ENCODE measurements at regions of chr20 and their contacts with region 1.

Region 1: DNA sequence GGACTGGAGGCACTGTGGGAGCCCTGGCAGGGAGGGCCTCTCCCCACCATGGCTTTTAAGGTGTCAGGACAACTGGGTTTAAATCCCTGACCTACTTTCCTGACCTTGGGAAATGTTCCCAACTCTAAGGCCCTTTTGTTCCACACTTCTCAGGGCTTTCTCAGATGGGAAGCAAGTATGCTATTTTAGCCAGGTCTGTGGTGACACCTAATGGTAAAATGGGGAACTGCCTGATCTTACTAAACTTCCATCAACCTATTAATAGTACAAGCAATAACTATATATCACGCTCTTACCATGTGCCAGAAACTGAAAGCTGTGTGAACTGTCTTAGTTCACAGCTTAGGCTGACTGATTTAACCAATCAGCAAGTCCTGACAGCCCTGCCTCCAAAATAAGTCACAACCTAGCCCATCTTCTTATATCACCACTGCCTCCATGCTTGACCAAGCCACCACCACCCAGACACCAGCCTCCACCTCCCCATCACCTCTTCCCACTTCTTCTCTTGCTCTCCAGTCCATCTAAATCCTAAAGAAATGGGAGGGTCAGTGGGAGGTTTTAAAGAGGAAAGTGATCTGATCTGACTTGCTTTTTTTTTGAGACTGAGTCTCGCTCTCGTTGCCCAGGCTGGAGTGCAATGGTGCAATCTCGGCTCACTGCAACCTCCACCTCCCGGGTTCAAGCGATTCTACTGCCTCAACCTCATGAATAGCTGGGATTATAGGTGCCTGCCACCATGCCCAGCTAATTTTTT is 6.9 kb upstream of the BLCAP start:
- DNase-seq: no peak
- ATAC-seq: peak; percentile 88 to 94
- H3K4me3 ChIP-seq: no peak overlapping the region
- H3K27ac ChIP-seq: peak overlapping the region in 1 of 4 donors; percentile 50
- H3K4me1 ChIP-seq: peaks cover 0 to 5% of the 10 kb centered on the region in 2 donors
- H3K27me3 ChIP-seq: no peaks in the 10 kb centered on the region
- CTCF ChIP-seq: peak; percentile 83 to 89 (median 88)
- POLR2A ChIP-seq: no peak

Region 2: GRCh38 chr20:37192137-37192854 is 342.3 kb before region 1 on chr20:
- in situ Hi-C with region 1: loop called (anchors 5 to 10 kb)
- intact Hi-C with region 1: loop called (anchors 1 kb)
- DNase-seq: peak; percentile 74 to 87
- ATAC-seq: peak; percentile 72 to 87
- H3K4me3 ChIP-seq: no peak overlapping the region
- H3K27ac ChIP-seq: peak overlapping the region in 3 of 4 donors; percentile 40 to 72 (median 47)
- H3K4me1 ChIP-seq: peaks cover 47 to 50% of the 10 kb centered on the region in 2 donors
- H3K27me3 ChIP-seq: no peaks in the 10 kb centered on the region
- CTCF ChIP-seq: peak; percentile 73 to 95 (median 85)
- POLR2A ChIP-seq: no peak

Region 3: DNA sequence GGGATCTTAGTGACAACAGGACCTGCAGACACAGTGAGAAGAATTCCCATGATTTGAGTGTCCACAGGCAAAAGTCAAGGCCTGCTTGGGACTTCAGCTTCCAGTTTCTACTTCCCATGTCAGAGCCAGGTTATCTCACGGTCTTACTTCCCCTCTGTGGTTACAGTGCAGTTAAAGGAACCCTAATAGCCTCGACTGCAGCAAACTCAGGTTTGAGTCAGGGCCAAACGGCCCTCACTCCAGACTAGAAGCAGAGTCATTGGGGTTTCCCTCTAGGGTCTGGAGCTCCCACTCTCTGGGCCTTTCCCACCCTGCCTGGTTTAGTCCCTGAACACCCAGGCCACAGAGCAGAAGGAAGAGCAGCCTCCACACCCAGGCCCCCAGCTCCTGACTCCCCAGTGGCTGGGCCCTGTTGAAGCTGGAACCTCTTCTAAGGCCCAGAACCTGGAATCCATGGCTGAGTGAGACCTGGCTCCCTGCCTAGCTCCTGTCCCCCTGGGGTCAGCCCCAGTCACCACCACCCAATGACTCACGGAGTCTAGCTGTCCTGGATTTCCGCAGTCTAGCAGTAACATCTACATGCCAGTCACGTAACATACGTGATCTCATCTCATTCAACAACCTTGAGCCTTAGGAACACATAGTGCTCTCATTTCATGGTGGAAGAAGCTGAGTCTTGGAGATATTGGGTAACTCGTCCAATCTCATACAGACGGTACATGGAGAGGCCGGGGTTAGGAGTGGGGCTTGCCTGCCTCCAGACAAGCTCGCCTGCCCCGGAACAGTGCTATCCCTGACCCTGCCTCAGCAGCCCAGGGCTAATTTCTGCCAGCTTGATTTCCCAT is 263.8 kb before region 1 on chr20:
- in situ Hi-C with region 1: loop called (anchors 5 kb)
- intact Hi-C with region 1: loop called (anchors 1 kb)
- DNase-seq: no peak
- ATAC-seq: no peak
- H3K4me3 ChIP-seq: no peak overlapping the region
- H3K27ac ChIP-seq: no peak overlapping the region
- H3K4me1 ChIP-seq: no peaks in the 10 kb centered on the region
- H3K27me3 ChIP-seq: no peaks in the 10 kb centered on the region
- CTCF ChIP-seq: no peak
- POLR2A ChIP-seq: no peak

Region 4: GRCh38 chr20:37392421-37393178 is 142.0 kb before region 1 on chr20:
- in situ Hi-C with region 1: loop called (anchors 5 to 25 kb)
- intact Hi-C with region 1: no loop called
- DNase-seq: no peak
- ATAC-seq: no peak
- H3K4me3 ChIP-seq: no peak overlapping the region
- H3K27ac ChIP-seq: no peak overlapping the region
- H3K4me1 ChIP-seq: no peaks in the 10 kb centered on the region
- H3K27me3 ChIP-seq: peaks cover 6 to 21% (median 16%) of the 10 kb centered on the region in 3 donors
- CTCF ChIP-seq: peak in 1 of 5 experiments; percentile 11
- POLR2A ChIP-seq: no peak